Activated naive CD4-positive, alpha-beta T cell treated with anti-CD3 and anti-CD28 coated beads for 36 hours (primary cell): ENCODE measurements at regions of chr2 and their contacts with region 1.

Region 1: DNA sequence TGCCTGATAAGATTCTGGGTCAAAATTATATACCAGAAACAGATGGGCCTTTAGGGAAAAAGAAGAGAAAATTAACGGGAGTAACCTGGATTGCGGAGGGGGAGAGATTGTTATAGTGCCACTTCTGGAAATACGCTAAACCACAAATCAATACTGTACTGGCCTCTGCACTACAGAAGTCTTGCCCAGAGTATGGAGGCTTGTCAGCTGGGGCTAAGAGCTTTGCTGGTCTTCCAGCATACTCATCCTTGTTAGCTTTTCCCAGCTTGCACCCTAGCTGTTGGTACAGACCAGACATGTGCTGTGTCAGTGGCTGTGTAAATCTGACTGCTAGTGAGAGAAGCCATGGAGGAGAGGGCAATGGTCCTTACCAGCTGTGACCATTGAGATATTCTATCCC is 8.9 kb downstream of the AGBL5 start:
- DNase-seq: no peak
- H3K4me3 Mint-ChIP-seq: no peak overlapping the region
- H3K27ac Mint-ChIP-seq: no peak overlapping the region
- H3K4me1 Mint-ChIP-seq: peaks cover 7% of the 10 kb centered on the region
- H3K27me3 Mint-ChIP-seq: no peaks in the 10 kb centered on the region

Region 2: GRCh38 chr2:26229595-26229994 is 830.7 kb before region 1 on chr2:
- CTCF ChIA-PET with region 1: no interaction called
- intact Hi-C with region 1: loop called (anchors 5 kb)
- DNase-seq: no peak
- H3K4me3 Mint-ChIP-seq: no peak overlapping the region
- H3K27ac Mint-ChIP-seq: no peak overlapping the region
- H3K4me1 Mint-ChIP-seq: no peaks in the 10 kb centered on the region
- H3K27me3 Mint-ChIP-seq: no peaks in the 10 kb centered on the region

Region 3: GRCh38 chr2:26922405-26923188 is 137.7 kb before region 1 on chr2:
- CTCF ChIA-PET with region 1: no interaction called
- intact Hi-C with region 1: no loop called
- DNase-seq: peak; percentile 63
- H3K4me3 Mint-ChIP-seq: no peak overlapping the region
- H3K27ac Mint-ChIP-seq: no peak overlapping the region
- H3K4me1 Mint-ChIP-seq: peaks cover 10% of the 10 kb centered on the region
- H3K27me3 Mint-ChIP-seq: peaks cover 12% of the 10 kb centered on the region

Region 4: DNA sequence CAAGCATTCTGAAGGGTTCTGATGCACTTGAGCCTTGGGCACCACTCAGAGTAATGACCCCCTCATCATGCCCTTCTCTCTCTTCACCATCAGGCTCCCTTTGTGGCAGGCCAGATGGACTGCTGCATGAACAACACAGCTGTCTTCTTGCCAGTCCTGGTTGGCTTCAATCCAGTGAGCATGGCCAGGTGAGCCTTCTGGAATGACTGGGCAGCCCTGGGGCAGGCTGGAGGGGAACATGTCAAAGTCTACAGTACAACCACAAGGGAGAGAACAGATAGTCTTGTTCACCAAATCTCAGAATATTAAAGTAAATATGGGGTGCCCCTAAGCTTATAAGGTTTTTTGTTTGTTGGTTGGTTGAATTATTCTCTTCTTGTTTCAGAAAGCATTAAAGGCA is 440.7 kb after region 1 on chr2:
- CTCF ChIA-PET with region 1: no interaction called
- intact Hi-C with region 1: no loop called
- DNase-seq: no peak
- H3K4me3 Mint-ChIP-seq: no peak overlapping the region
- H3K27ac Mint-ChIP-seq: no peak overlapping the region
- H3K4me1 Mint-ChIP-seq: no peaks in the 10 kb centered on the region
- H3K27me3 Mint-ChIP-seq: peaks cover 13% of the 10 kb centered on the region

Region 5: DNA sequence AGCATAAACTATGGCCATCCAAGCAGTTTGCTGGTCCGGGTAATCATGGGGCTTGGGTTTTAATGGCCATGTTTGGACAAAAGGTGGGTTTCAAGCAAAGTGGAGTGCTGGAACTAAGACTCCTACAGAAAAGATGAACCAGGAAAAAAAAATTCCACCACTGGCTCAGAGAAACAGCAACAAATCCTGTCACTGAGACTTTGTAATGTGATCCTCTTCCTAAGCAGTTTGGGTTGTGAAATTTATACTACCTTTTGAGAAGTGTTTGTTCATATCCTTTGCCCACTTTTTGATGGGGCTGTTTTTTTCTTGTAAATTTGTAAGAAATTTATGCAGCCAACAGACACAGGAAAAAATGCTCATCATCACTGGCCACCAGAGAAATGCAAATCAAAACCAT is 751.4 kb after region 1 on chr2:
- CTCF ChIA-PET with region 1: no interaction called
- intact Hi-C with region 1: no loop called
- DNase-seq: no peak
- H3K4me3 Mint-ChIP-seq: no peak overlapping the region
- H3K27ac Mint-ChIP-seq: no peak overlapping the region
- H3K4me1 Mint-ChIP-seq: peaks cover 1% of the 10 kb centered on the region
- H3K27me3 Mint-ChIP-seq: no peaks in the 10 kb centered on the region